ENCODE measurements at regions of chr20 and their contacts with region 1.

Region 1: DNA sequence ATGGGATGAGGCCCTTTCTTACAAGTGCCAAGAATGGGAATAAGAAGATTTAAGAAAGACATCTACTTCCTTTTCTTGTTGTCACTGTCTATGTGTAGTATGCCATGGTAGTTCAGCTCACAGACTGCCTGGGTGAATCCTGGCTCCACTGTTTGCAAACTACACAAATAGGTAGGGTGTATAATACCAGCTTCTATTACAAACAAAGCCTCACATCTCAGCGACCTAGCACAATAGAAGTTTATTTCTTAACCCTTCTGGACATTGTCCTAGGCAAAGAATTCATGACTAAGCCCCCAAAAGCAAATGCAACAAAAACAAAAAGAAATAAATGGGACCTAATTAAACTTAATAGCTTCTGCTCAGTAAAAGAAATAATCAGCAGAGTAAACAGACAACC is 74.5 kb downstream of the LINC00237 start:
- DNase-seq: no peak
- H3K4me3 Mint-ChIP-seq: no peak overlapping the region
- H3K27ac Mint-ChIP-seq: no peak overlapping the region
- H3K4me1 Mint-ChIP-seq: no peaks in the 10 kb centered on the region
- H3K27me3 Mint-ChIP-seq: peaks cover 12% of the 10 kb centered on the region

Region 2: GRCh38 chr20:21048841-21049273 is 17.2 kb after region 1 on chr20:
- CTCF ChIA-PET with region 1: interaction called, 19 read pairs
- intact Hi-C with region 1: no loop called
- DNase-seq: peak; percentile 56
- H3K4me3 Mint-ChIP-seq: no peak overlapping the region
- H3K27ac Mint-ChIP-seq: no peak overlapping the region
- H3K4me1 Mint-ChIP-seq: no peaks in the 10 kb centered on the region
- H3K27me3 Mint-ChIP-seq: peaks cover 23% of the 10 kb centered on the region

Measured in activated naive CD4-positive, alpha-beta T cell treated with anti-CD3 and anti-CD28 coated beads for 36 hours (primary cell).